ENCODE measurements at regions of chr11 and their contacts with region 1.

Region 1: DNA sequence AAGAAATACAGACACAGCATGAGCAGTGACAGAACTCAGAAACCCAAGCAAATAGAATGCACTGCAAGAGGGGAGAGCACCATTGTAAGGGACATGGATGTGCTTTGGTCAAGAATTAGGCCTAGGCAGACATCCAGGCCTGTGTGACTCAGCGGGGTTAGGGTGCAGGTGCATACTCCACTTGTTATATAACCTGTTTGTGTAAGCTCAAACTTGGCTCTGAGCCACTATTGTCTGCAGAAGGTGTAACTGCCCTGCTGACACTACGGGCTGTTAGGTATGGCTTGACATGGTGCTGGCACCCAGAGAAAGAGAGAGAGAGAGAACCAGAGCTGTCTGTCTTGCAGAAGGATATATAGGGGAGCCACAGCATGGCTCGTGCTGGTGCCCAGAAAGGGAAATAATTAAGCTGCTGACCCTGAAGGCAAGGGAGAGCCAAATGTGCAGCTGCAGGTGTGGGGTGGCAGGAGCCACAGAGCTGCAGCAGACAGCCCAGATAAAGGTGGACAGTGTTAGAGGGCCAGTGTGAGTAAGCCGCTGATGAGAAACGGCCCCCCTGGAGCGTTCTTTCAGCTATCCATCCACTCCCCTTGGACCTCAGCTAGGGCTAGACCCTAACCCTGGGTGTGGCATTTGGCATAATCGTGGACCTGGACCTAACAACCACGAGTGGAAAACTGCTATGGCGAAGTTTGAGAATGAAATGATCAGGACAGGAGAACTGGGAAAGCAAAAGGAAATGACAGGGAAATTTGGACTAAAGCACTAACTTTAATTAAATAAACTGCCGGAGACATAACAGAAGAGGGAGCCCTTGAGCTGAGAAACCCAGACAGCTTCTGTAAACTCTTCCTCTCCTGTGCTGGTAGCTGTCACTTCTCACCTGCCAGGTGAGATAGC is 253.0 kb upstream of the CCDC179 start:
- DNase-seq: no peak
- H3K4me3 ChIP-seq: no peak overlapping the region
- CTCF ChIP-seq: peak; percentile 49

Region 2: GRCh38 chr11:22875869-22876473 is 237.3 kb before region 1 on chr11:
- CTCF ChIA-PET with region 1: interaction called, 19 read pairs
- POLR2A ChIA-PET with region 1: no interaction called
- DNase-seq: peak; percentile 58
- H3K4me3 ChIP-seq: no peak overlapping the region
- CTCF ChIP-seq: peak; percentile 50

Region 3: GRCh38 chr11:23021287-23021863 is 91.9 kb before region 1 on chr11:
- CTCF ChIA-PET with region 1: interaction called, 14 read pairs
- POLR2A ChIA-PET with region 1: no interaction called
- DNase-seq: no peak
- H3K4me3 ChIP-seq: no peak overlapping the region
- CTCF ChIP-seq: peak; percentile 65

Region 4: GRCh38 chr11:23087407-23087806 is 25.8 kb before region 1 on chr11:
- CTCF ChIA-PET with region 1: no interaction called
- POLR2A ChIA-PET with region 1: no interaction called
- DNase-seq: no peak
- H3K4me3 ChIP-seq: no peak overlapping the region
- CTCF ChIP-seq: no peak

Region 5: DNA sequence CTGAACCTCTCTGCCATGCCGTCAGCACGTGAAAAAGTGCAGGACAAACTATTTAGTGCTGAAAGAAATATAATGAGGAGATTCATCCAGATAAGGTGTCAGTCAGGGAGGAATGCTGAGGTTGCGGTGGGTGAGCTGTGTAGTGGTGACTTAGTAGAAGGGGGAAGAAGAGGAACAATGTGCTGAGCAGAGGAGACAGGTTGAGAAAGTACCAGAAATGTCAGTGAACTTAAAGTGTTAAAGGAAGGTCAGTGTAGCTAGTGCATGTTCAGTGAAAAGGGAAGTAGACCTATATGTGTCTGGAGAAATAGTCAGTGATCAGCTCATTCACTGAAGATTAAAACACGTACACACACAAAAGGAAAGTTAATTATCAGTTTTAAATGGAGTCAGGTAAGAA is 15.3 kb before region 1 on chr11:
- CTCF ChIA-PET with region 1: interaction called, 20 read pairs
- POLR2A ChIA-PET with region 1: interaction called, 3 read pairs
- DNase-seq: no peak
- H3K4me3 ChIP-seq: no peak overlapping the region
- CTCF ChIP-seq: no peak

Region 6: GRCh38 chr11:23123753-23124152 is 10.5 kb after region 1 on chr11:
- CTCF ChIA-PET with region 1: interaction called, 16 read pairs
- POLR2A ChIA-PET with region 1: no interaction called
- DNase-seq: no peak
- H3K4me3 ChIP-seq: no peak overlapping the region
- CTCF ChIP-seq: no peak

Region 7: GRCh38 chr11:23423104-23423503 is 309.9 kb after region 1 on chr11:
- CTCF ChIA-PET with region 1: interaction called, 15 read pairs
- POLR2A ChIA-PET with region 1: no interaction called
- DNase-seq: peak; percentile 29
- H3K4me3 ChIP-seq: no peak overlapping the region
- CTCF ChIP-seq: no peak

Measured in AG04449 (cell line).